ENCODE measurements at regions of chr9 and their contacts with region 1.

Region 1: GRCh38 chr9:126914458-126915280 is at the start of gene RALGPS1:
- DNase-seq: peak; percentile 98
- ATAC-seq: peak; percentile 93
- H3K4me3 Mint-ChIP-seq: peak within 1 kb of the TSS; percentile 72
- H3K27ac Mint-ChIP-seq: peak within 1 kb of the TSS; percentile 81; the same call in 1 of the 2 replicates
- H3K4me1 Mint-ChIP-seq: peaks cover 28% of the 10 kb centered on the region
- H3K27me3 Mint-ChIP-seq: peaks cover 35% of the 10 kb centered on the region
- CTCF ChIP-seq: no peak
- total RNA-seq, gene RALGPS1: 26.1 to 28.5 TPM (median 27.4 TPM) in 3 replicates

Region 2: GRCh38 chr9:126763130-126763764 is 151.4 kb before region 1 on chr9:
- CTCF ChIA-PET with region 1: no interaction called
- POLR2A ChIA-PET with region 1: no interaction called
- DNase-seq: no peak
- ATAC-seq: peak; percentile 90
- H3K4me3 Mint-ChIP-seq: no peak overlapping the region
- H3K27ac Mint-ChIP-seq: no peak overlapping the region
- H3K4me1 Mint-ChIP-seq: no peaks in the 10 kb centered on the region
- H3K27me3 Mint-ChIP-seq: peaks cover 6% of the 10 kb centered on the region; the same call in 1 of the 2 replicates
- CTCF ChIP-seq: no peak

Region 3: GRCh38 chr9:126882746-126883145 is 31.9 kb before region 1 on chr9:
- CTCF ChIA-PET with region 1: no interaction called
- POLR2A ChIA-PET with region 1: no interaction called
- DNase-seq: no peak
- ATAC-seq: no peak
- H3K4me3 Mint-ChIP-seq: no peak overlapping the region
- H3K27ac Mint-ChIP-seq: peak overlapping the region; percentile 76; the same call in 1 of the 2 replicates
- H3K4me1 Mint-ChIP-seq: peaks cover 29% of the 10 kb centered on the region
- H3K27me3 Mint-ChIP-seq: no peaks in the 10 kb centered on the region
- CTCF ChIP-seq: no peak

Region 4: DNA sequence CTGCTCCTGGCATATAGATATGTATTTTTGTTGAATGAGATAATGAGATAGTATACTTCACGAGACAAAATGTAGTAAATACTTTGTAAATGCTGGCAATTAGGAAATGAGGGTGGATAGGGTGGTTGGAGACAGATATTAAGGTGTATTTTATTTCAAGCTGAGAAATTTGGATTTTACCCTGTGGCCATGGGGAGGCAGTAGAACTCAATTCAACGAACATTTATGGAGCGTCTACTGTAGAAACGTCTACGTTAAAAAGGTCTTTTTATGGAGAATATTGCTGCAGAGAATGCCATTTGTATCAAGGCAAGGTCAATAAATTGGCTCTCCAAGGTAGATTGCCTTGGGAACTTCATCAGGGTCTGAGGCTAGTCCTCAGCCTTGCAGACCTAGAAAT is 21.6 kb before region 1 on chr9:
- CTCF ChIA-PET with region 1: interaction called, 15 read pairs
- POLR2A ChIA-PET with region 1: no interaction called
- DNase-seq: no peak
- ATAC-seq: no peak
- H3K4me3 Mint-ChIP-seq: no peak overlapping the region
- H3K27ac Mint-ChIP-seq: no peak overlapping the region
- H3K4me1 Mint-ChIP-seq: no peaks in the 10 kb centered on the region
- H3K27me3 Mint-ChIP-seq: no peaks in the 10 kb centered on the region
- CTCF ChIP-seq: no peak

Region 5: GRCh38 chr9:126927419-126927818 is 12.8 kb after region 1 on chr9:
- CTCF ChIA-PET with region 1: interaction called, 18 read pairs
- POLR2A ChIA-PET with region 1: interaction called, 3 read pairs
- DNase-seq: no peak
- ATAC-seq: no peak
- H3K4me3 Mint-ChIP-seq: no peak overlapping the region
- H3K27ac Mint-ChIP-seq: no peak overlapping the region
- H3K4me1 Mint-ChIP-seq: no peaks in the 10 kb centered on the region
- H3K27me3 Mint-ChIP-seq: no peaks in the 10 kb centered on the region; the same call in 1 of the 2 replicates
- CTCF ChIP-seq: no peak

Region 6: DNA sequence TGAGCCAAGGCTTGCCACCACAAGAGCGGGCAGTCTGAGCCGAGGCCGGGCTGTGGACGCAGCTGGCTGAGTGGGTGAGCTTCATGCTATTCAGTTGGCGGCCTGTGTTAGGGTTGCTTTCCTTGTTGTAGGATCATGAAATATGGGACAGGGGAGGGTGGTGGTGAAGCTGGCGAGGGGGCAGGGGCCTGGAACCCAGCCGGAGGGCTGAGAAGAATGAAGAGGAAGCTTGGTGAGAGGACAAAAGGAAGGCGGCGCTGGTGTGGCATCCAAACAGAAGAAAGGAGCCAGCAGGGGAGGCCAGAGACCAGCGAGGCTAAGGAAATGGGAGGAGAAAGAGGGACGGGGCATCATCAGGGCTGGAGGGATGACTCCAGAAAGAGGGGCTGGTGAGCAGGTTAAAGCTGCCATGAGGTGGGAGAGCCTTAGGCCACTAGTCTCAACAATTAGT is 18.2 kb after region 1 on chr9:
- CTCF ChIA-PET with region 1: interaction called, 18 read pairs
- POLR2A ChIA-PET with region 1: interaction called, 3 read pairs
- DNase-seq: peak; percentile 48
- ATAC-seq: peak; percentile 76
- H3K4me3 Mint-ChIP-seq: no peak overlapping the region
- H3K27ac Mint-ChIP-seq: no peak overlapping the region
- H3K4me1 Mint-ChIP-seq: peaks cover 12% of the 10 kb centered on the region
- H3K27me3 Mint-ChIP-seq: no peaks in the 10 kb centered on the region; the same call in 1 of the 2 replicates
- CTCF ChIP-seq: no peak

Region 7: GRCh38 chr9:126939821-126940221 is 25.2 kb after region 1 on chr9:
- CTCF ChIA-PET with region 1: interaction called, 21 read pairs
- POLR2A ChIA-PET with region 1: no interaction called
- DNase-seq: no peak
- ATAC-seq: no peak
- H3K4me3 Mint-ChIP-seq: no peak overlapping the region
- H3K27ac Mint-ChIP-seq: no peak overlapping the region
- H3K4me1 Mint-ChIP-seq: peaks cover 16% of the 10 kb centered on the region
- H3K27me3 Mint-ChIP-seq: no peaks in the 10 kb centered on the region
- CTCF ChIP-seq: no peak

Measured in WTC11 (cell line).